HepG2 (cell line): ENCODE measurements at regions of chrX and their contacts with region 1.

Region 1: GRCh38 chrX:49120099-49120498 is 3.4 kb downstream of the GPKOW start:
- DNase-seq: no peak
- ATAC-seq: no peak
- H3K4me3 ChIP-seq: no peak overlapping the region
- H3K27ac ChIP-seq: no peak overlapping the region
- H3K4me1 ChIP-seq: peaks cover 17% of the 10 kb centered on the region
- H3K27me3 ChIP-seq: no peaks in the 10 kb centered on the region
- CTCF ChIP-seq: peak; percentile 29; the same call in 1 of the 2 replicates
- EP300 ChIP-seq: no peak
- POLR2A ChIP-seq: no peak
- RAD21 ChIP-seq: no peak

Region 2: DNA sequence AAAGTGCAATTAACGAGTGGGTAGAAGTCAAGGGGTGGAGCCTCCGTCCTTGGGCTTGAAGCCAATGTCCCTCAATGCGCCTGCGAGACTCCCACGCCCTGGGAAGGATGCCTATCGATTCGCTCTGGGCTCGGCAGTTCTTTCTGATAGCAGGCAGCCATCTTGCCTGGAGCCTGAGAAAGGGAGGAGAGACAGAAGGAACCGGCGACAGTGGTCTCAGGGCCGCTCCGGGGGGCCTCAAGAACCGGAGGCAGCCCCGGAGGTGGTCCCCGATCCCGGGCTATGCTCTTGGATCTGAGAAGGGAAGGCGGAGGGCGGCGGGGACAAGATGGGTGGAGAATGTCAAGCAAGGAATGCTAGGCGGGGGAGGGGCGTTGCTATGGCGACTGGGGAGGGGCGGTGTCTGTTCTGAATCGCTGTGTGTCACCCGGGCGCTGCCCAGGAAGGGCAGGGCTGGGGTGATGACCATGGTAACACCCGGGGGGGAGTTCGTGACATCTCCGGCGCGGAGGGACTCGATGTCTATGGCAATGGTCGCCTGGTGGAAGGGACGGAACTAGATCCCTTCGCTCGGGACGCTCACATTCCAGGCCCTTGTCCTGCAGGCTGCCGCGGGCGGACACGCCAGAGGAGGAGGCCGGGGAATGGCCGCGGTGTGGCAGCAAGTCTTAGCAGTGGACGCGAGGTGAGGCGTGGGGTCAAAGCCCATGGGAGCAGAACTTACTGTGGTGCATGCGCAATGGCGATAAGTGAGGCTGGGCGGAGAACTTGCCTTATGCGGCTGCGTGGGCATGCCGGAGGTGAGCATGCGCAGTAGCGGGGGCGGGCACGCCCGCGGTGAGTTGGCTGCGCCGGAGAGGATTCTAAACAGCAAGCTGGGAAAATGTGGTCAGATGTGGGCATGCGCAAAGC is 522.5 kb before region 1 on chrX and contains the start of gene WDR13:
- CTCF ChIA-PET with region 1: no interaction called
- POLR2A ChIA-PET with region 1: no interaction called
- in situ Hi-C with region 1: no loop called
- intact Hi-C with region 1: no loop called
- DNase-seq: peak; percentile 84
- ATAC-seq: peak; percentile 89
- H3K4me3 ChIP-seq: peak within 1 kb of the TSS; percentile 73 to 81 (median 74); a peak in 5 of 6 replicates
- H3K27ac ChIP-seq: peak within 1 kb of the TSS; percentile 98
- H3K4me1 ChIP-seq: peaks cover 17% of the 10 kb centered on the region
- H3K27me3 ChIP-seq: no peaks in the 10 kb centered on the region
- CTCF ChIP-seq: peak; percentile 42; the same call in 1 of the 2 replicates
- EP300 ChIP-seq: no peak
- POLR2A ChIP-seq: peak; percentile 73 to 88
- RAD21 ChIP-seq: no peak
- total RNA-seq, gene WDR13: 19.3 and 28.7 TPM in 2 replicates

Region 3: GRCh38 chrX:48835524-48836329 is 284.4 kb before region 1 on chrX and contains the start of gene PCSK1N:
- CTCF ChIA-PET with region 1: no interaction called
- POLR2A ChIA-PET with region 1: no interaction called
- in situ Hi-C with region 1: no loop called
- intact Hi-C with region 1: no loop called
- DNase-seq: peak; percentile 88
- ATAC-seq: peak; percentile 82
- H3K4me3 ChIP-seq: peak within 1 kb of the TSS; percentile 62 to 81 (median 65)
- H3K27ac ChIP-seq: peak within 1 kb of the TSS; percentile 77
- H3K4me1 ChIP-seq: peaks cover 32% of the 10 kb centered on the region
- H3K27me3 ChIP-seq: no peaks in the 10 kb centered on the region
- CTCF ChIP-seq: no peak
- EP300 ChIP-seq: peak in 1 of 2 experiments; percentile 15; a peak in 1 of 4 replicates
- POLR2A ChIP-seq: peak in 1 of 2 experiments; percentile 49; a peak in 2 of 4 replicates
- RAD21 ChIP-seq: no peak
- total RNA-seq, gene PCSK1N: 5.1 and 14.0 TPM in 2 replicates

Region 4: GRCh38 chrX:49163555-49164419 is 43.7 kb after region 1 on chrX:
- CTCF ChIA-PET with region 1: interaction called, 6 read pairs
- POLR2A ChIA-PET with region 1: no interaction called
- in situ Hi-C with region 1: loop called (anchors 5 kb)
- intact Hi-C with region 1: loop called (anchors 5 kb)
- DNase-seq: peak; percentile 53
- ATAC-seq: peak; percentile 84
- H3K4me3 ChIP-seq: peak overlapping the region; percentile 30 to 65 (median 53); a peak in 4 of 6 replicates
- H3K27ac ChIP-seq: peak overlapping the region; percentile 71
- H3K4me1 ChIP-seq: peaks cover 33% of the 10 kb centered on the region; the same call in 1 of the 2 replicates
- H3K27me3 ChIP-seq: no peaks in the 10 kb centered on the region
- CTCF ChIP-seq: peak; percentile 82
- EP300 ChIP-seq: no peak
- POLR2A ChIP-seq: 0 out of 4 replicates have a peak, but pooled peaks have one; percentile 19 to 43
- RAD21 ChIP-seq: peak; percentile 81